Activated CD4-positive, alpha-beta memory T cell treated with anti-CD3 and anti-CD28 coated beads for 36 hours (primary cell): ENCODE measurements at regions of chr10 and their contacts with region 1.

Region 1: GRCh38 chr10:80599424-80599847 is 61.7 kb downstream of the SH2D4B start:
- DNase-seq: peak; percentile 55
- H3K4me3 Mint-ChIP-seq: no peak overlapping the region
- H3K27ac Mint-ChIP-seq: no peak overlapping the region
- H3K4me1 Mint-ChIP-seq: no peaks in the 10 kb centered on the region
- H3K27me3 Mint-ChIP-seq: no peaks in the 10 kb centered on the region

Region 2: GRCh38 chr10:80553436-80553835 is 46.0 kb before region 1 on chr10:
- CTCF ChIA-PET with region 1: no interaction called
- POLR2A ChIA-PET with region 1: no interaction called
- intact Hi-C with region 1: no loop called
- DNase-seq: no peak
- H3K4me3 Mint-ChIP-seq: no peak overlapping the region
- H3K27ac Mint-ChIP-seq: no peak overlapping the region
- H3K4me1 Mint-ChIP-seq: peaks cover 2% of the 10 kb centered on the region
- H3K27me3 Mint-ChIP-seq: peaks cover 2% of the 10 kb centered on the region

Region 3: DNA sequence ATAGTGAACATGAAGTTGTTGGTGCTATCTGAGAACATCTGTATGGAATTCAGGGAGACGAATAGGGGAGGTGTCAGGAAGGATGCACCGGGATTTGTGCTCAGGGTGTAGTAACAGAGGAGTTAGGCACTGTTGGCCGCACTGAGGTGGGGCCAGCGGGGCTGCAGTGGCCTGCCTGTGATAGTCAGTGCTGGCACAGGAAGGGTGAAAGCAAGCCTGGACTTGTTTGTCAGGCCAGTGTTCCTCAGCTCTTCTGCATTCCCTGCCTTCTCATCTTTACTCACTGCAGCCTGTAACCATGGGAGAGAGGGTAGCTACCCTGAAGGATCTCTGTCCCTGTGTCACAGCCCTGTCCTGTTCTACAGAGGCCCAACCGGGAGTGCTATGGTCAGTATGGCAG is 19.6 kb after region 1 on chr10:
- CTCF ChIA-PET with region 1: interaction called, 10 read pairs
- POLR2A ChIA-PET with region 1: no interaction called
- intact Hi-C with region 1: no loop called
- DNase-seq: no peak
- H3K4me3 Mint-ChIP-seq: no peak overlapping the region
- H3K27ac Mint-ChIP-seq: no peak overlapping the region
- H3K4me1 Mint-ChIP-seq: no peaks in the 10 kb centered on the region
- H3K27me3 Mint-ChIP-seq: no peaks in the 10 kb centered on the region